Stomach (tissue), 19 donors: ENCODE measurements at regions of chr17 and their contacts with region 1.

Region 1: GRCh38 chr17:43576563-43577229 is 30.6 kb upstream of the ETV4 start:
- DNase-seq: peak; percentile 68 to 93
- H3K4me3 ChIP-seq: no peak overlapping the region
- H3K27ac ChIP-seq: no peak overlapping the region
- H3K4me1 ChIP-seq: peaks cover 4 to 17% (median 15%) of the 10 kb centered on the region in 4 donors
- H3K27me3 ChIP-seq: peaks cover 0 to 15% (median 0%) of the 10 kb centered on the region in 3 donors
- CTCF ChIP-seq: peak in 5 of 7 experiments; percentile 74 to 95 (median 85)
- EP300 ChIP-seq: no peak
- POLR2A ChIP-seq: no peak

Region 2: GRCh38 chr17:43442711-43443110 is 134.0 kb before region 1 on chr17:
- intact Hi-C with region 1: no loop called
- DNase-seq: no peak
- H3K4me3 ChIP-seq: no peak overlapping the region
- H3K27ac ChIP-seq: no peak overlapping the region
- H3K4me1 ChIP-seq: peaks cover 0 to 6% (median 0%) of the 10 kb centered on the region in 4 donors
- H3K27me3 ChIP-seq: no peaks in the 10 kb centered on the region
- CTCF ChIP-seq: no peak
- EP300 ChIP-seq: no peak
- POLR2A ChIP-seq: no peak

Region 3: GRCh38 chr17:43673516-43674323 is 97.0 kb after region 1 on chr17:
- intact Hi-C with region 1: loop called (anchors 2 kb)
- DNase-seq: peak; percentile 82 to 88
- H3K4me3 ChIP-seq: no peak overlapping the region
- H3K27ac ChIP-seq: no peak overlapping the region
- H3K4me1 ChIP-seq: peaks cover 6 to 21% (median 13%) of the 10 kb centered on the region in 4 donors
- H3K27me3 ChIP-seq: no peaks in the 10 kb centered on the region
- CTCF ChIP-seq: peak in 5 of 7 experiments; percentile 76 to 95 (median 91)
- EP300 ChIP-seq: no peak
- POLR2A ChIP-seq: no peak

Region 4: GRCh38 chr17:43760254-43760852 is 183.7 kb after region 1 on chr17:
- intact Hi-C with region 1: loop called (anchors 5 kb)
- DNase-seq: peak; percentile 96 to 97
- H3K4me3 ChIP-seq: no peak overlapping the region
- H3K27ac ChIP-seq: no peak overlapping the region
- H3K4me1 ChIP-seq: peaks cover 3 to 19% (median 4%) of the 10 kb centered on the region in 4 donors
- H3K27me3 ChIP-seq: peaks cover 11 to 37% (median 22%) of the 10 kb centered on the region in 3 donors
- CTCF ChIP-seq: peak in 5 of 7 experiments; percentile 86 to 100 (median 96)
- EP300 ChIP-seq: no peak
- POLR2A ChIP-seq: no peak